ENCODE measurements at regions of chr5 and their contacts with region 1.

Region 1: DNA sequence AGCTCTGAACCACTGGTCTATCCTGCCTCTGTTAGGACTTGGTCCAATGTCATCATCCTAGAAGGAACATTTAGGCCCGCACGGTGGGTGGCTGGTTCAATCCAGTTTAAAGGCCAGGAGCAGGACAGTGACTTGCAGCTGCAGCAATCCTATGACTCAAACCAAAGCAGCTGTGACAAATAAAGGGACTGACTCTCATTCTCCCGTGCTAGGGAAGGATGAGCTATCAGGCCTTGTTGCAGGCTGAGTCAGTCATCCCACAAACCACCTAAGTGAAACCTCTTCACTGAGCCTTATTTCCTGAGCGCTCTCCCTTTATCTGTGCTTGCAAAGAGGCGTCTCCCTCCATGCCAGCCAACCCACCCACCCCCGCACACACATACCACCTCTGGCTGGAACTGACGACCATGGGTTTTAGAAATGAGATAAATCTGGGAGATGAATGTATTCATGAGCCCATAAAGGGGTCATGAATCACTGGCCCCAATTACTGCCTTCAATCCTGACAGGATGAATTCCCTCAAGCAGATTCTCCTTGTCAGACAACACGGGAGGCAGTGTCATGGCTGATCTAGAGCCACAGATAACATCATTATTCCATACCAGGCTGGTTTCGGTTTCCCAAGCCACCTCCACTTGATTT is 93.4 kb downstream of the KCNIP1 start:
- DNase-seq: peak; percentile 62
- H3K4me3 Mint-ChIP-seq: no peak overlapping the region
- H3K27ac Mint-ChIP-seq: peak overlapping the region; percentile 43
- H3K4me1 Mint-ChIP-seq: peaks cover 18% of the 10 kb centered on the region
- H3K27me3 Mint-ChIP-seq: peaks cover 29% of the 10 kb centered on the region

Region 2: DNA sequence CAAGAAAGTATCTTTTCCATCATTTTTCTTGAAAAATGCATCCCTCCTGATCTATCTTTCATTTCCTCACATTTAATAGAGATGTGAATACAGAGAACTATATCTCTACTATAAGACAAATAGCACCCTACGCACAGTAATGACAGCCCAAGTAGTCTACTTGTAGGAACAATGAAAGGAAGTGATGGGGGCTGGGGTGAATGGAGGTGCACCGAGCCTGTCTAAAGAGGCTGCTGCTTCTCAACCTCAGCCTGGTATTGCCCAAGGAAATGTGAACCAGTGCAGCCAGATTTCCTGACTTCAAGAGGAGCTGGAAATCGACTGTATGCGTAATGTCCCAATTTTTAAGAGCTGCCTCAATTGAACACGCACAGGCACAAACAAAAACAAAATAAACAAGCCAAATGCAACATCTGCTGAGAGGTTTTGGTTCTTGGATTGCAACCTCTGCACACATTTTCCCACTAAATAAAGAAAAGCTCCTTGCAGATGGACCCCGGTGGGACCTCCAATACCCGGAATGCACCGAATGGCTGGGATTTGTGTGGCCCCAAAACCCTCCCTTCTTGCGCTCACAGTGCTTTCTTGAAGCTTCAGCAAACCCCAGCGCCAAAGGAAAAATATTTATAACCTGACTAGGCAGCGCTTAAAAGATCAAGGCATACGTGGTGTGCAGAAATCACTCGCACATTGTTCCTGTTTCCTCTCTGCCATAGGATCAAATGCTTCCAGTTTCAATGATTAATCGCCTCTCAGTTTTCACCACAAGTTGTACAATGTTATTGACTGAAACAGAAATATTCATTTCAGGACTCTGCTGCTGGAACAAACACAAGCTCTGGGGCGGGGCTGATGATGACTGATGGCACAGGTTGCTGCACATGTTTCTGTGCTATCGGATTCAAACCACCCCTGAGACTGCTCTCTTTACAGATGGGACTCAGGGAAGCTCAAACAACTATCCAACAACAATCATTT is 25.1 kb before region 1 on chr5:
- intact Hi-C with region 1: loop called (anchors 1 kb)
- DNase-seq: peak; percentile 72
- H3K4me3 Mint-ChIP-seq: no peak overlapping the region
- H3K27ac Mint-ChIP-seq: peak overlapping the region; percentile 37
- H3K4me1 Mint-ChIP-seq: peaks cover 14% of the 10 kb centered on the region
- H3K27me3 Mint-ChIP-seq: peaks cover 37% of the 10 kb centered on the region

Measured in activated CD4-positive, alpha-beta T cell treated with anti-CD3 and anti-CD28 coated beads, Interleukin-2, amount 10 ng/mL, durations not matched to agents 24 days and 14 days (primary cell).